Mammary epithelial cell (primary cell): ENCODE measurements at regions of chr21 and their contacts with region 1.

Region 1: GRCh38 chr21:46458315-46459023 is at the start of gene DIP2A:
- DNase-seq: peak; percentile 97
- H3K4me3 ChIP-seq: peak within 1 kb of the TSS; percentile 80 to 91 (median 84)
- H3K27ac ChIP-seq: peak within 1 kb of the TSS; percentile 96
- H3K4me1 ChIP-seq: peaks cover 37% of the 10 kb centered on the region
- H3K27me3 ChIP-seq: no peaks in the 10 kb centered on the region
- CTCF ChIP-seq: no peak
- total RNA-seq, gene DIP2A: 49.5 to 51.3 TPM

Region 2: GRCh38 chr21:46317710-46318473 is 140.6 kb before region 1 on chr21:
- CTCF ChIA-PET with region 1: no interaction called
- dilution Hi-C with region 1: no loop called
- in situ Hi-C with region 1: no loop called
- intact Hi-C with region 1: no loop called
- DNase-seq: no peak
- H3K4me3 ChIP-seq: no peak overlapping the region
- H3K27ac ChIP-seq: no peak overlapping the region
- H3K4me1 ChIP-seq: peaks cover 13% of the 10 kb centered on the region
- H3K27me3 ChIP-seq: no peaks in the 10 kb centered on the region
- CTCF ChIP-seq: no peak

Region 3: GRCh38 chr21:46402421-46402820 is 56.0 kb before region 1 on chr21:
- CTCF ChIA-PET with region 1: no interaction called
- dilution Hi-C with region 1: no loop called
- in situ Hi-C with region 1: no loop called
- intact Hi-C with region 1: no loop called
- DNase-seq: no peak
- H3K4me3 ChIP-seq: no peak overlapping the region
- H3K27ac ChIP-seq: no peak overlapping the region
- H3K4me1 ChIP-seq: peaks cover 8% of the 10 kb centered on the region
- H3K27me3 ChIP-seq: no peaks in the 10 kb centered on the region
- CTCF ChIP-seq: no peak

Region 4: DNA sequence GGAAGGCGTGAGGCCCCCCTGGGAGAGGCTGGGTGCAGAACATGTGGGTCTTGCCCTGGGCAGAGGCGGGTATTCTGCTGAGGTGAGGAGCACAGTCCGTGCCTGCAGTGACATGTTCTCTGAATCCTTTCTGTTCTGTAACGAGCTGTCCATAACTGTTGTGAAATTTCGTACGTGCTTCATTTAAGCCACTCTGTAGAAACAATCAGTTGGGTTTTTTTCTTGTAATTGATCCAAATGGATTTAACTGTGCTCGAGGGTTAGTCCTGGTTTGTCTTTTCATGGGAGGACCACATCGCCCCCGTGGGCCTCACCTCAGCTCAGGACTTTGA is 45.1 kb before region 1 on chr21:
- CTCF ChIA-PET with region 1: no interaction called
- dilution Hi-C with region 1: no loop called
- in situ Hi-C with region 1: no loop called
- intact Hi-C with region 1: loop called (anchors 2 kb)
- DNase-seq: peak; percentile 32
- H3K4me3 ChIP-seq: no peak overlapping the region
- H3K27ac ChIP-seq: no peak overlapping the region
- H3K4me1 ChIP-seq: peaks cover 10% of the 10 kb centered on the region
- H3K27me3 ChIP-seq: no peaks in the 10 kb centered on the region
- CTCF ChIP-seq: no peak

Region 5: GRCh38 chr21:46483300-46484295 is 25.1 kb after region 1 on chr21:
- CTCF ChIA-PET with region 1: no interaction called
- dilution Hi-C with region 1: no loop called
- in situ Hi-C with region 1: no loop called
- intact Hi-C with region 1: no loop called
- DNase-seq: no peak
- H3K4me3 ChIP-seq: no peak overlapping the region
- H3K27ac ChIP-seq: no peak overlapping the region
- H3K4me1 ChIP-seq: peaks cover 3% of the 10 kb centered on the region
- H3K27me3 ChIP-seq: no peaks in the 10 kb centered on the region
- CTCF ChIP-seq: no peak